B cell (primary cell): ENCODE measurements at regions of chr18 and their contacts with region 1.

Region 1: DNA sequence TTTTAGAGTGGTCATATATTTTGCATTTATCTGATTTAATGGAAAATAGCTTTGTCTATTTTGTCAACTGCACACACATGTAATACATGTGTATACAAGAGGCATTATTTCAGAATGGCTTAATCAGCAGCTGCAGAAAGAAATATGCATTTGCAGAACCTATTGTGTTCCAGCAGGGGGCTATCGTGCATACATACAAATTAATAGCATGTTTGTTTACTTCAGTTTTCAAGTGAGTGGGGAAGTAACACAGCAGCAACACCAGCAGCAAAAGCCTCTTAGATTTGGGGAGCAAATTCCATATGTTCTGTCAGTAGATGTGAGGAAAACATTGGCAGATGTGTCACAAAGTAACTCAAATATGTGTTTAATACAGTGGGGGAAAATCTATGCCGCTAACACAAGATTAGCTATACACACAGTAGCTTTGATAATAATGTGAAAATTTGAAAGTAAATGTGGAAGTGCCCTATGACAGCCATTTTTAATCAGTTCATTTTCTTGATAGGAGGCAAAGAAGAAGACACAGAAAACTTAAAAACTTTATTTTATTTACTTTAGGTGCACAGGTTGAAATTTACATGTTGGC is 218.1 kb downstream of the WDR7 start:
- DNase-seq: peak; percentile 46
- ATAC-seq: no peak
- H3K4me3 ChIP-seq: no peak overlapping the region
- H3K4me3 Mint-ChIP-seq: no peak overlapping the region
- H3K27ac ChIP-seq: no peak overlapping the region
- H3K27ac Mint-ChIP-seq: no peak overlapping the region
- H3K4me1 ChIP-seq: no peaks in the 10 kb centered on the region
- H3K4me1 Mint-ChIP-seq: no peaks in the 10 kb centered on the region
- H3K27me3 ChIP-seq: no peaks in the 10 kb centered on the region
- H3K27me3 Mint-ChIP-seq: no peaks in the 10 kb centered on the region
- CTCF ChIP-seq: peak; percentile 72

Region 2: DNA sequence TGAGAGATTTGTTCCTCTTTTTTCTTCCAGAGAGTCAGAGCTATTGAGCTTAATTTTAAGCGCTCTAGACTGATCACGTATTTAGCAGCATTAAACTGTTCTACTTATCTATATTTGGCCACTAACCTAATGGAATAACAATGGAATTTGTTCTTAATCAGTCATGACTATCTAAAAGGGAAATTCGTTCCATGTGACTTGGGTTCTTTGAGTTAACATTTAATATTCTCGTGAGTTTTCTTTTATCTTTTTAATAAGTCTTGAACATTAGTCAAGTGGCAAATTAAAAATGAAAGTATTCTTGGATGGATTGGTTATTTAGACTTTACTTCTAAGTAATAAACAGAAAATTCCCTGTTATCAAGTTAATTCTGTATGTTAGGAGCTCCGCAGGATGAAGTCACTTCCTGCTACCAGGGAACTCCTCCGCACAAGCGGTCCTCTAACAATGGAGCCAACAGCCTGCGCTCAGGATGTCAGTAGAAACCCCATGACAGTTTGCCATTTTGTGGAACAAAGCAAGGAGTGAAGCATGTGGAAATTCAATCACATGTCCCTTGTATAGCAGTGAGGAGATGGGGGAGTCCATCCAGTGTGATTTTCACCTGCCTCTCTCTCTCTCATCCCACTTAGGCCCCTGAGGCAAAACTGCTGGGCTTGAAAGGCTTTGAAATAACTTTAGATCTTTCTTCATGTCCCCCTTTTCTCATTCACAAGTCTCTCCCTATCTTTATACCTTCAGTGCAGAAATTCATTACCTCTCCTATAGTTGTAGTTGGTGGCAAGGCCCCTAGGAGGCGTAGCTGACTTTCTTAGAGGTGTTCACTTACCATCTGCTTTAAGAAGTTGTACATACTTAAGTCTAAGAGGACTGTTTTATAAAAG is 80.0 kb before region 1 on chr18:
- CTCF ChIA-PET with region 1: interaction called, 3 read pairs
- POLR2A ChIA-PET with region 1: no interaction called
- intact Hi-C with region 1: loop called (anchors 10 kb)
- DNase-seq: no peak
- ATAC-seq: no peak
- H3K4me3 ChIP-seq: no peak overlapping the region
- H3K4me3 Mint-ChIP-seq: no peak overlapping the region
- H3K27ac ChIP-seq: no peak overlapping the region
- H3K27ac Mint-ChIP-seq: no peak overlapping the region
- H3K4me1 ChIP-seq: no peaks in the 10 kb centered on the region
- H3K4me1 Mint-ChIP-seq: no peaks in the 10 kb centered on the region
- H3K27me3 ChIP-seq: no peaks in the 10 kb centered on the region
- H3K27me3 Mint-ChIP-seq: no peaks in the 10 kb centered on the region
- CTCF ChIP-seq: peak; percentile 32

Region 3: GRCh38 chr18:57446322-57446721 is 577.0 kb after region 1 on chr18:
- CTCF ChIA-PET with region 1: interaction called, 3 read pairs
- POLR2A ChIA-PET with region 1: no interaction called
- intact Hi-C with region 1: loop called (anchors 2 kb)
- DNase-seq: peak; percentile 13
- ATAC-seq: no peak
- H3K4me3 ChIP-seq: no peak overlapping the region
- H3K4me3 Mint-ChIP-seq: no peak overlapping the region
- H3K27ac ChIP-seq: no peak overlapping the region
- H3K27ac Mint-ChIP-seq: no peak overlapping the region
- H3K4me1 ChIP-seq: peaks cover 7 to 13% of the 10 kb centered on the region in 2 donors
- H3K4me1 Mint-ChIP-seq: peaks cover 6% of the 10 kb centered on the region
- H3K27me3 ChIP-seq: peaks cover 0 to 41% (median 33%) of the 10 kb centered on the region in 4 experiments
- H3K27me3 Mint-ChIP-seq: peaks cover 76% of the 10 kb centered on the region
- CTCF ChIP-seq: peak; percentile 33